ENCODE measurements at regions of chr1 and their contacts with region 1.

Region 1: DNA sequence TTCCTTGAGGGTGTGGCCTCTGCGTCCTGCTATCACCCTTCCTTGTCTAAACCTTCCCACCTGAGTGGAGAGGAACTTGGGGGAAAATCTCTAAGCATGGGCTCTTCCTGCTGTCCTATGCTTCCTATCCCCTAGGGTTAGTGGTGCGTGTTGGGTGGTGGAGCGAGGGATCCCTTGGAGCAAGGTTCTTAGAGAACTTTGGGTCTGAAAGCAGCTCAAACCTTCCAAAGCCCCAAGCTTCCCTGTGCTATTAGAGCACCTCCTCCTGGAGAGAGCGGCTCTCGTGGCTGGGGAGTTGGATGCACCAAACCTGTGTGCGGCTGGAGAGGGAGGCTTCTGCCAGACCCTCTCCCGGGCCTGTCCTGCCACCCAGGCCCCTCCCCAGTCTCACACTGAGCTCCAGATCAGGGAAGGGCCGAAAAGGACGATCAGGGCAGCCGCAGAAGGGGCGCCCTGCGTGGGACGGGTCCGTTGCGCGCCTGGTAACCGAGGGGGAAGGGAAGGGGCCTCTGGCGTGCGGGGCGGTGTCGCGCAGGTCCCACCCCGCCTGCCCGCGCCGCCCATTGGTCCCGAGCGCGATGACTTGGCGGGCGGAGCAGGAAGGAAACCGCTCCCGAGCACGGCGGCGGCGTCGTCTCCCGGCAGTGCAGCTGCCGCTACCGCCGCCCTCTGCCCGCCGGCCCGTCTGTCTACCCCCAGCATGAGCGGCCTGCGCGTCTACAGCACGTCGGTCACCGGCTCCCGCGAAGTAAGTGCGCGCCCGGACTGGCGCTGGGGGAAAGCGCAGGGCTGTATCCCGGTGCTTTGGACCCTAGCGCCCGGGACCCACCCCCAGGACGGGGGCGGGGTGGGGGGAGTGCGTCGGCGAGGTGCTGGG is at the start of gene SH3BGRL3:
- DNase-seq: peak; percentile 82
- H3K4me3 Mint-ChIP-seq: peak within 1 kb of the TSS; percentile 89
- H3K27ac Mint-ChIP-seq: peak within 1 kb of the TSS; percentile 89
- H3K4me1 Mint-ChIP-seq: peaks cover 78% of the 10 kb centered on the region
- H3K27me3 Mint-ChIP-seq: no peaks in the 10 kb centered on the region
- CTCF ChIP-seq: no peak
- total RNA-seq, gene SH3BGRL3: 133 and 170 TPM in 2 replicates

Region 2: GRCh38 chr1:26169669-26170471 is 109.8 kb before region 1 on chr1 and contains the start of gene ZNF593:
- CTCF ChIA-PET with region 1: interaction called, 6 read pairs
- POLR2A ChIA-PET with region 1: interaction called, 12 read pairs
- intact Hi-C with region 1: no loop called
- DNase-seq: peak; percentile 86
- H3K4me3 Mint-ChIP-seq: peak within 1 kb of the TSS; percentile 86
- H3K27ac Mint-ChIP-seq: peak within 1 kb of the TSS; percentile 93
- H3K4me1 Mint-ChIP-seq: no peaks in the 10 kb centered on the region
- H3K27me3 Mint-ChIP-seq: no peaks in the 10 kb centered on the region
- CTCF ChIP-seq: peak; percentile 91
- total RNA-seq, gene ZNF593: 61.5 and 82.6 TPM in 2 replicates

Region 3: GRCh38 chr1:26233903-26234643 is 45.6 kb before region 1 on chr1 and contains the start of gene CEP85:
- CTCF ChIA-PET with region 1: interaction called, 7 read pairs
- POLR2A ChIA-PET with region 1: interaction called, 83 read pairs
- intact Hi-C with region 1: no loop called
- DNase-seq: peak; percentile 97
- H3K4me3 Mint-ChIP-seq: peak within 1 kb of the TSS; percentile 96
- H3K27ac Mint-ChIP-seq: peak within 1 kb of the TSS; percentile 85
- H3K4me1 Mint-ChIP-seq: peaks cover 30% of the 10 kb centered on the region
- H3K27me3 Mint-ChIP-seq: no peaks in the 10 kb centered on the region
- CTCF ChIP-seq: peak; percentile 80
- total RNA-seq, gene CEP85: 11.1 and 12.2 TPM in 2 replicates

Region 4: DNA sequence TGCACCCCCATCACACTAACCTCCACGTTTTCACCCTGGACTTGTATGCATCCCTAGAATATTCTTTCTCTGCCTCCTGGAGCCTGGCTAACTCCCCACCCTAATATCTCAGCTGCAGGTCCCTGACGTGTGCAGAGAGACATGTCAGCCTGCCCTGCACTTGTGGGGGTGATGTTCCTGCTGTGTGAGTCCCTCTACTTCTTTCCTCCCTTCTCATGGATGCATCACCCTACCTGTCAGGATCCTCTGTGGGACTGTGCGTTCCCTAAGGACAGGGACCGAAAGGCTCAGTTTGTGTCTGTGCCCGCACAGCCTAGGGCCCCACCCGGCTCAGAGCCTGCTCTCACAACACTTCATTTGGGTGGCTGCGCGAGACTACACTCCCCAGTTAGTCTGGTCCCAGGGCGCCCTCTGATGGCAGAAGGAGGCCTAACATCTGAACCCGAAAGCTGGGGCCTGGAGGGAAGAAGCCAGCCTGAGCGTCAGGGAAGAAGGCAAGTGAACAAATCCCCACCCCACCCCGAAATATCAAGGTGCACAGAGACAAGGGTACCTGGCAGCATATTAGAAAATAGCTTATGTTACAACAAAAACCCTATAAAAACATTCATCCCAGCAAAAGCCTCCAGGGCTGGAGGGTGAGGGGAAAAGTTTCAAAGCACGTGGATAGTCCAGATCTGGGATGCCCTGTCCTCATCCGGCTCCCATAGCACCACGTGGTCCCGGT is 41.8 kb after region 1 on chr1:
- CTCF ChIA-PET with region 1: interaction called, 51 read pairs
- POLR2A ChIA-PET with region 1: interaction called, 24 read pairs
- intact Hi-C with region 1: loop called (anchors 1 kb)
- DNase-seq: peak; percentile 88
- H3K4me3 Mint-ChIP-seq: no peak overlapping the region
- H3K27ac Mint-ChIP-seq: peak overlapping the region; percentile 3
- H3K4me1 Mint-ChIP-seq: peaks cover 8% of the 10 kb centered on the region
- H3K27me3 Mint-ChIP-seq: no peaks in the 10 kb centered on the region
- CTCF ChIP-seq: peak; percentile 89

Region 5: DNA sequence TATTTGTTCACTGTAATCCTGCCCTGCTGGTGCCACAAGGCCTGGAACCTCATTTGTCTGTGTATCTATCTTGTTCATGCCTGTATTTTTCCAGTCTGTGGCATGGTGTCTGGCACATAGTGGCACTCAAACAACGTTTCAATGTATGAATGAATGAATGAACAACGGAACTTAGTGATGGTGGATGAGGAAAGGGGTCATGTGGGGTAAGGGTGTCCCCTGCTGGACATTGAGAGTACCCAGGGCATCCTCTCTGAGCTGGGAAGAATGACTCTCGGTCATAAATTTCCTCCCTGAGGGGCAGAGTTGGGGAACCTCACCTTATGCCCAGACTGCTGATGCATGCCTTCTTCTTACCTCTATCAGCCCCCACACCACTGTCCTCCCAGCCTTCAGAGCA is 111.8 kb after region 1 on chr1:
- CTCF ChIA-PET with region 1: interaction called, 14 read pairs
- POLR2A ChIA-PET with region 1: interaction called, 5 read pairs
- intact Hi-C with region 1: loop called (anchors 1 kb)
- DNase-seq: peak; percentile 78
- H3K4me3 Mint-ChIP-seq: no peak overlapping the region
- H3K27ac Mint-ChIP-seq: no peak overlapping the region
- H3K4me1 Mint-ChIP-seq: peaks cover 14% of the 10 kb centered on the region
- H3K27me3 Mint-ChIP-seq: no peaks in the 10 kb centered on the region
- CTCF ChIP-seq: peak; percentile 91

Region 6: GRCh38 chr1:26431979-26432695 is 152.4 kb after region 1 on chr1 and contains the start of gene DHDDS:
- CTCF ChIA-PET with region 1: interaction called, 7 read pairs
- POLR2A ChIA-PET with region 1: interaction called, 17 read pairs
- intact Hi-C with region 1: no loop called
- DNase-seq: peak; percentile 97
- H3K4me3 Mint-ChIP-seq: peak within 1 kb of the TSS; percentile 94
- H3K27ac Mint-ChIP-seq: peak within 1 kb of the TSS; percentile 88
- H3K4me1 Mint-ChIP-seq: peaks cover 12% of the 10 kb centered on the region
- H3K27me3 Mint-ChIP-seq: no peaks in the 10 kb centered on the region
- CTCF ChIP-seq: no peak
- total RNA-seq, gene DHDDS: 48.2 and 56.2 TPM in 2 replicates

Measured in MCF 10A (cell line).